ENCODE measurements at regions of chr20 and their contacts with region 1.

Region 1: GRCh38 chr20:49964964-49965780 is 17.6 kb upstream of the SNAI1 start:
- DNase-seq: peak; percentile 60
- H3K27ac ChIP-seq: no peak overlapping the region
- CTCF ChIP-seq: peak; percentile 62

Region 2: GRCh38 chr20:49948809-49949548 is 16.2 kb before region 1 on chr20:
- CTCF ChIA-PET with region 1: interaction called, 13 read pairs
- POLR2A ChIA-PET with region 1: interaction called, 7 read pairs
- DNase-seq: no peak
- H3K27ac ChIP-seq: peak overlapping the region; percentile 20; the same call in 1 of the 2 replicates
- CTCF ChIP-seq: no peak

Measured in RWPE1 (cell line).